Calu3 (cell line): ENCODE measurements at regions of chr5 and their contacts with region 1.

Region 1: DNA sequence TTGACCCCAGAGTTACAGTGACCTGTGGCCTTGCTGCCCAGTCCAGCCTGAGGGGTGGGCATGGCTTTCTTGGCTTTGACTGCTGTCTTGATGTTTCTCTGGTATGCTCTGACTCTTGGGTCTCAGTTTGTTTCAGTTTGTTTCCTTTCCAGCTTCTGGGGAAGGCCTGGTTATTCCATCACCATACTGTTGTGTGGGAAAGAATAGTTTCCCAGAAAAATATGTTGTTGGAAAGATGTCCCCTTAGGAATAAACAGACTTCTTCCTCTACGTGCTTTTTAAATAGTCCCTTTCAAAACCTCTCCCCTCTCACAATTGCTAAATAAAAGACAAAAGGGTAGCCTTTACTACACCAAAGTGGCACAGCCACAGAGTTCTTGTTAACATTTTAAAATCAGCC is 49.5 kb downstream of the EGFLAM start:
- DNase-seq: no peak
- H3K4me3 Mint-ChIP-seq: no peak overlapping the region
- H3K27ac Mint-ChIP-seq: no peak overlapping the region
- H3K4me1 Mint-ChIP-seq: no peaks in the 10 kb centered on the region
- H3K27me3 Mint-ChIP-seq: peaks cover 36% of the 10 kb centered on the region
- CTCF ChIP-seq: no peak

Region 2: GRCh38 chr5:38273624-38274023 is 34.2 kb before region 1 on chr5:
- CTCF ChIA-PET with region 1: no interaction called
- intact Hi-C with region 1: loop called (anchors 2 kb)
- DNase-seq: no peak
- H3K4me3 Mint-ChIP-seq: no peak overlapping the region
- H3K27ac Mint-ChIP-seq: no peak overlapping the region
- H3K4me1 Mint-ChIP-seq: no peaks in the 10 kb centered on the region
- H3K27me3 Mint-ChIP-seq: peaks cover 53% of the 10 kb centered on the region
- CTCF ChIP-seq: no peak